ENCODE measurements at regions of chr1 and their contacts with region 1.

Region 1: DNA sequence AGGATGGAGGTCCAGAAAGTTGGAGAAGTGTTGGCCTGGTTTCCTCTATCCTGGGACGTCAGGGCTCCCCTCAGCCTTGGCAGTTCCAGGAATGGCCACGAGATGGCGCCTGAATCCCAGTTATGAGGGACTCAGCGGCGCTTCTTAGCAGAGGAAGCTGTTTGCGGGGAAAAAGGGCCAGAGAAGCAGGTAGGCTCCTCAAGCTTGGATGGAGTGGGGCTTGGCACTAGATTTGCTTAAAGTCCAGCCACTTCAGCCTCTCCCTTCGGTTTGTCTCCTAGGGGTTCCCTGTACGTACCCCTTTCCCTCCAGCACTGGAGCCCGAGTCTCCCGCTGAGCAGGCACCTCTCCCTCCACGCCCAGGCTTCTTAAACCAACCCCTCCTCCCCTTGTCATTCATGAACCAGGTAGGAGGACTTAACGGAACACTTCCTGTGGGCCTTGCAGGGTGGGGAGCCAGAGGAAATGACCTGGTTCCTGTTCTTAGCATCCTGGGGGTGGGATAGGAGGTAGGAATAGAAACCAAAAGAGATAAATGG is 32.0 kb upstream of the TENT5B start:
- DNase-seq: peak; percentile 90 to 92
- H3K4me3 ChIP-seq: no peak overlapping the region
- H3K27ac ChIP-seq: no peak overlapping the region
- H3K4me1 ChIP-seq: no peaks in the 10 kb centered on the region
- H3K27me3 ChIP-seq: no peaks in the 10 kb centered on the region
- CTCF ChIP-seq: peak; percentile 97 to 99 (median 98)
- POLR2A ChIP-seq: no peak

Region 2: DNA sequence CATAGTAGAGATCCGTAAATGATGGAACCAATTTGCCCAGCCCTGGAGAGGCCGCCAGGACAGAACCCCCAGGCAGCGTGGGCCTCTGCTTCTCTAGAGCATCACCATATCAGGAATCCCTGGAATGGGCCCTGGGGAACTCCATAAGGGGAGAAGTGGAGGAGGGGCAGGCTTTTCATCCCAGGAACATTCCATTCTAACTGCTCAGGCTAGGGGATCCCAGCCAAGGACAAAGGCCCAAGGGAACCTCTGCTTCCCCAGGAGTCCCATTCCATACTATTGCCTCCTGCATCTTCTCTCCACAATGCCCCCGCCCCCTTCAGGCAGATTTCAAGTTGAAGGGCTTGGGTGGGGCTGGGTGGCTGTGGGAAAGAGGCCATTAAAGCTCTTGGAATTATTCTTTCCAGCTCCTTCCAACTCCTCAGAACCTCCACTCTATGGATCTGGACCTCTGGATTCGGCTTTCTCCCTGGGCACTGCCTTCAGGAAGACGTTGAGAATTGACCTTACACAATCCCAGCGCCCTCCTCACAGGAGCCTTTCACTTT is 45.2 kb before region 1 on chr1:
- intact Hi-C with region 1: loop called (anchors 2 kb)
- DNase-seq: peak; percentile 83 to 91
- H3K4me3 ChIP-seq: no peak overlapping the region
- H3K27ac ChIP-seq: peak overlapping the region; percentile 78 to 86
- H3K4me1 ChIP-seq: peaks cover 4 to 9% of the 10 kb centered on the region in 2 donors
- H3K27me3 ChIP-seq: no peaks in the 10 kb centered on the region
- CTCF ChIP-seq: peak in 1 of 4 experiments; percentile 7
- POLR2A ChIP-seq: peak in 1 of 2 donors; percentile 17

Region 3: DNA sequence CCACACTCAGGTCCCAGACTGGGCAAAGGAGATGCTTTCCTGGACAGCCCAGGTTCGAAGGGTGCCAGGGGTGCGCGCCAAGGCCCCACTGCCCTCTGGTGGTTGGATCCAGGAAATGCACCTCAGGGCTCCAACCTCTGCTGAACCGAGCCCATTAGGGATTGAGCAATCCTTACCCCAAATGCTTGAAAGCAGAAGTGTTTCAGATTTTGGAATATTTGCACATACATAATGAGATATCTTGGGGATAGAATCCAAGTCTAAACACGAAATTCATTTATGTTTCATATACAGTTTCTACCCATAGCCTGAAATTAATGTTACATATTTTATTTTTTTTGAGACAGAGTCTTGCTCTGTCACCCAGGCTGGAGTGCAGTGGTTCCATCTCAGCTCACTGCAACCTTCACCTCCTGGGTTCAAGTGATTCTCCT is 52.8 kb after region 1 on chr1:
- intact Hi-C with region 1: loop called (anchors 2 kb)
- DNase-seq: peak; percentile 82 to 87
- H3K4me3 ChIP-seq: no peak overlapping the region
- H3K27ac ChIP-seq: peak overlapping the region in 1 of 2 donors; percentile 88
- H3K4me1 ChIP-seq: peaks cover 6 to 18% of the 10 kb centered on the region in 2 donors
- H3K27me3 ChIP-seq: no peaks in the 10 kb centered on the region
- CTCF ChIP-seq: peak; percentile 93 to 97 (median 95)
- POLR2A ChIP-seq: no peak

Region 4: DNA sequence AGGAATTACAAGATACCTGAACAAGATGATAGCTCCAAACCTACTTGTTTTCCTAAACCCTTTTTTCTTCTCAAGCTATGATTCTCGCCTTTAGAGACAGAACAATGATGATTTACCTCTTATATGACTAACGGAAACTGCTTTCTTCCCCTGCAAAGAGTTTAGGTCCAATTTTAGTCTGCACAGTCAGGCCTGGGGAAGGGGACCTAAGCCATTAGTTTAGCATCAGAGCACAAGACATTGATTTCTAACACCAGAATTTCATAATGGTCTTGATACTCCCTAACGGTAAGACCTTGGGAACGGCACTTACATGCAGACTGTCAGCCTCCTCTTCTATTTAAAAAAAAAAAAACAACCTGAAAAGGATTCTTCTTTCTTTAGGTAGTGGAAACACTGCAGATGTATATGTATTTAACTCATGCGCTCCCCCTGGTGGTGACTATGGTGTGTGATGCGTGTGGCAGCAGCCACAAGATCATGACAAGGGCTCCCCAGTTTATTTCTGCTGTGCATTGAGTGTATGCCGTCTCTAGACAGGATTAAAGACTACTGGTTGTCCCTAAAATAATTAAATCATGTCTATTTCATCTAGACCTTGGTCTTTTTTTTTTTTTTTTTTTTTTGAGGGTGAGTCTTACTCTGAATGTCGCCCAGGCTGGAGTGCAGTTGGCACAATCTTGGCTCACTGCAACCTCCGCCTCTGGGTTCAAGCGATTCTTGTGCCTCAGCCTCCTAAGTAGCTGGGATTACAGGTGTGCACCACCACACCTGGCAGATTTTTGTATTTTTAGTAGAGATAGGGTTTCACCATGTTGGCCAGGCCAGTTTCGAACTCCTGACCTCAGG is 240.0 kb after region 1 on chr1:
- intact Hi-C with region 1: loop called (anchors 10 kb)
- DNase-seq: peak; percentile 78 to 86
- H3K4me3 ChIP-seq: no peak overlapping the region
- H3K27ac ChIP-seq: no peak overlapping the region
- H3K4me1 ChIP-seq: no peaks in the 10 kb centered on the region
- H3K27me3 ChIP-seq: no peaks in the 10 kb centered on the region
- CTCF ChIP-seq: peak; percentile 68 to 81 (median 70)
- POLR2A ChIP-seq: no peak

Measured in uterus (tissue), 4 donors.